ENCODE measurements at regions of chr10 and their contacts with region 1.

Region 1: DNA sequence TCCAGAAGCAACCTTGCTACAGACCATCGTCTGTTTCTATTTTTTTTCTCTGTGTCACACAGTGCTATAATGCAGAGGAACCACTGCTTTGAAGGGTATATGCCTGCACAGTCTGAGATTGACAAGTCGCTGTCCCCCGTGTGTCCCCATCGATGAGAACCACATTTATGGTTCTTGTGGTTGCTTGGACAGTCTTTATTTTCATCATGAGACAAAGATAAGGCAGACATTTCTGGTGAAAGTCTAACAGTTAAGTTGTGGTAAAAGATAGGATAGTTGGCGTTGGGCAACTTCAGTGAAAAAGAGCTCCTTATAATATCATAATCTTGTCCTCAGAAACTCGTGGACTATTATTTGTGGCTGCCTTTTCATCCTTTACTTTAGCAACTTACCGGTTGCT is 6.3 kb upstream of the AKR1E2 start:
- H3K4me3 Mint-ChIP-seq: no peak overlapping the region
- H3K27ac Mint-ChIP-seq: peak overlapping the region; percentile 70
- H3K4me1 Mint-ChIP-seq: peaks cover 39% of the 10 kb centered on the region
- H3K27me3 Mint-ChIP-seq: peaks cover 11% of the 10 kb centered on the region

Region 2: DNA sequence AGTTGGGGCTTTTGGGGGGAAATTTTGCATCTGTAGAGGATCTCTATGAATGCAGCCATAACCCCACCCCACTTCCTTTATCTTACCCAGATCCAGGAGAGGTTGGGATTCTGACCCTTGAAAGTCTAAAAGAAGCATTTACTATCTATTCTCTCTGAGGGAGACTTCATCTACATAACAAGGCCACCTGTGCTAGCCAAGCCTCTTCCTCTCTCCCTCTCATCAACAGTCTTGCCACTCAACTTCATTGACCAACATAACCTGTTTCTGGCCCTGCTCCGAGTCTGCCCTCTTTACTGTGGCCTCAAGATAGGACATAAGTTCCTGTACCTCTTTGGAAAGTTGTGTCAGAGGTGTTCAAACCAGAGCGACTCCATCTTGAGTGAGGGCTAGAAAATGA is 565.5 kb after region 1 on chr10:
- intact Hi-C with region 1: loop called (anchors 5 kb)
- H3K4me3 Mint-ChIP-seq: no peak overlapping the region
- H3K27ac Mint-ChIP-seq: no peak overlapping the region
- H3K4me1 Mint-ChIP-seq: no peaks in the 10 kb centered on the region
- H3K27me3 Mint-ChIP-seq: no peaks in the 10 kb centered on the region